Activated CD4-positive, alpha-beta T cell treated with anti-CD3 and anti-CD28 coated beads, Interleukin-2, amount 10 ng/mL, durations not matched to agents 24 days and 14 days (primary cell): ENCODE measurements at regions of chr5 and their contacts with region 1.

Region 1: GRCh38 chr5:110086658-110087388 is 397.1 kb downstream of the MAN2A1 start:
- DNase-seq: peak; percentile 80
- H3K4me3 Mint-ChIP-seq: peak overlapping the region; percentile 52
- H3K27ac Mint-ChIP-seq: peak overlapping the region; percentile 82
- H3K4me1 Mint-ChIP-seq: peaks cover 30% of the 10 kb centered on the region
- H3K27me3 Mint-ChIP-seq: no peaks in the 10 kb centered on the region

Region 2: GRCh38 chr5:108748401-108749127 is 1338.3 kb before region 1 on chr5:
- intact Hi-C with region 1: loop called (anchors 5 kb)
- DNase-seq: peak; percentile 99
- H3K4me3 Mint-ChIP-seq: peak overlapping the region; percentile 87
- H3K27ac Mint-ChIP-seq: peak overlapping the region; percentile 84
- H3K4me1 Mint-ChIP-seq: peaks cover 8% of the 10 kb centered on the region
- H3K27me3 Mint-ChIP-seq: peaks cover 37% of the 10 kb centered on the region

Region 3: GRCh38 chr5:109921735-109922380 is 165.0 kb before region 1 on chr5:
- intact Hi-C with region 1: loop called (anchors 5 kb)
- DNase-seq: peak; percentile 88
- H3K4me3 Mint-ChIP-seq: peak overlapping the region; percentile 72
- H3K27ac Mint-ChIP-seq: peak overlapping the region; percentile 90
- H3K4me1 Mint-ChIP-seq: peaks cover 26% of the 10 kb centered on the region
- H3K27me3 Mint-ChIP-seq: no peaks in the 10 kb centered on the region

Region 4: GRCh38 chr5:109959652-109960051 is 127.2 kb before region 1 on chr5:
- intact Hi-C with region 1: loop called (anchors 10 kb)
- DNase-seq: no peak
- H3K4me3 Mint-ChIP-seq: no peak overlapping the region
- H3K27ac Mint-ChIP-seq: no peak overlapping the region
- H3K4me1 Mint-ChIP-seq: peaks cover 6% of the 10 kb centered on the region
- H3K27me3 Mint-ChIP-seq: no peaks in the 10 kb centered on the region

Region 5: DNA sequence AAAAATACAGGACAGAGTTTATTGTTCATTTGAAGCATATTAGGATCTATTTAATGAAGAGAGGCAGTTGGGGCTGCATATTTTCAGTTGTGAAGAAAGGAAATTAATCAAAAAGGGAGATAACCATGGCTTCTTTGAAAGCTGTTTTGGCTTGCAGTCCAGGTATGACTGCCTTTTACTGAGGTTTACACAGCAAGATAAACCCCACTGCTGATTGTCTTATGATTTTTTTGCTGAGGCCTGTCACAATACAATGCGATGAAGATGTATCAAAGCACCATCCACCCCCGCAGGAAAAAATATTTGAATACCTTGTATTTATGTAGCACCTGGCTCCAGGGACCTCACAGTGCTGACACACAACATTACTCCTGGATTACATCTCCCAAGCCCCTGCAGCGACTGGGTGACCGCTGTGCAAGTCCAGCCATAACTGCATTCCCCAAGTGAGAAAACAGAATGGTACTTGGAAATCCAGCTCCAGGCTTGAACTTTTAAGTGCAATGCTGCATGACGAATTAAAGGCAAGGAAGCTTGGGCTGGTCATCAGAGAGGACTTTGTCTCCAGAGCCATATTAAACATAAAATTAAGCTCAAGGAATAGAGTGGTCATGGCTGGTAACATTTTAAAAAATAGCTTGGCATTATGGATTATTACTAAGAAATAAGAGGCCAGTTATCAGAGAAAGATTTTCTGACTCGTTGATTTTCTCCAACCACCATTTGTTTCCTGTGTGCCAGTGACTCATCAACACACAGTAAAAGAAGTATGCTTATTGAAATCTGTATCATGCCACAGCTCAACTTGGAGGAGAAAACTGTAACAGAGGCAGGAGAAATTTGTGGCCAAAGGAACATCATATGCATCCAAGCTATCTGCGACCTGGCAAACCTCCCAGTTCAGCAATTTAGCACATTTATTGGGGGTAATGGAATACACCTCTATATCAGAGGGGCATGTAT is 22.9 kb before region 1 on chr5:
- intact Hi-C with region 1: loop called (anchors 1 kb)
- DNase-seq: no peak
- H3K4me3 Mint-ChIP-seq: no peak overlapping the region
- H3K27ac Mint-ChIP-seq: no peak overlapping the region
- H3K4me1 Mint-ChIP-seq: peaks cover 18% of the 10 kb centered on the region
- H3K27me3 Mint-ChIP-seq: no peaks in the 10 kb centered on the region

Region 6: DNA sequence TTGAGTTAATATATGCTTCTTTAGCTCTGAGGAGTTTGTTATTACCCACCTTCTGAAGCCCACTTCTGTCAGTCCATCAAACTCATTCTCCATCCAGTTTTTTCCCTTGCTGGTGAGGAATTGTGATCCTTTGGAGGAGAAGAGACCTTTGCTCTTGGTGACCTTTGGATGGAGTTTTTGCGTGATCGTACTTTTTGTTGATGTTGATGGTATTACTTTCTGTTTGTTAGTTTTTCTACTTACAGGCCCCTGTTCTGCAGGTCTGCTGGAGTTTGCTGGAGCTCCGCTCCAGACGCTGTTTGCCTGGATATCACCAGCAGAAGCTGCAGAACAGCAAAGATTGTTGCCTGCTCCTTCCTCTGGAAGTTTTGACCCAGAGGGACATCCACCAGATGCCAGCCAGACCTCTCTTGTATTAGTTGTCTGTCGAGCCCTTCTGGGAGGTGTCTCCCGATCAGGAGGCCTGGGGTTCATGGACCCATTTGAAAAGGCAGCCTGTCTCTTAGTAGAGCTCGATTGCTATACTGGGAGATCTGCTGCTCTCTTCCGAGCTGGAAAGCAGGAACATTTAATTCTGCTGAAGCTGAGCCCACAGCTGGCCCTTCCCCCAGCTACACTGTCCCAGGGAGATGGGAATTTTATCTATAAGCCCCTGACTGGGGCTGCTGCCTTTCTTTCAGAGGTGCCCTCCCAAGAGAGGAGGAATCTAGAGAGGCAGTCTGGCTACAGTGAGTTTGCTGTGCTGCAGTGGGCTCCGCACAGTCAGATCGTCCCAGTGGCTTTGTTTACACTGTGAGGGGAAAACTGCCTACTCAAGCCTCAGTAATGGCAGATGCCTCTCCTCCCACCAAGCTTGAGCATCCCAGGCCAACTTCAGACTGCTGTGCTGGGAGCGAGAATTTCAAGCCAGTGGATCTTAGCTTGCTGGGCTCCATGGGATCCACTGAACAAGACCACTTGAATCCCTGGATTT is 48.4 kb after region 1 on chr5:
- intact Hi-C with region 1: no loop called
- DNase-seq: no peak
- H3K4me3 Mint-ChIP-seq: no peak overlapping the region
- H3K27ac Mint-ChIP-seq: no peak overlapping the region
- H3K4me1 Mint-ChIP-seq: no peaks in the 10 kb centered on the region
- H3K27me3 Mint-ChIP-seq: no peaks in the 10 kb centered on the region

Region 7: DNA sequence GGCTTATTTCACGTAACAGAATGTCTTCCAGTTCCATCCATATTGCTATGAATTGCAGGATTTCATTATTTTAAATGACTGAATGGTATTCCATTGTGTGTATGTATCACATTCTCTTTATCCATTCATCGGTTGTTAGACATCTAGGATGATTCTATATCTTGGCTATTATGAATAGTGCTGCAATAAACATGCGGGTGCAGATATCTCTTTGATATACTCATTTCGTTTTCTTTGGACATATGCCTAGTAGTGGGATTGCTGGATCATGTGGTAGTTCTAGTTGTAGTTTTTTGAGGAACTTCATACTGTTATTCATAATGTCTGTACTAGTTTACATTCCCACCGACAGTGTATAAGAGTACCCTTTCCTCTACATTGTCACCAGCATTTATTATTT is 63.4 kb after region 1 on chr5:
- intact Hi-C with region 1: no loop called
- DNase-seq: no peak
- H3K4me3 Mint-ChIP-seq: no peak overlapping the region
- H3K27ac Mint-ChIP-seq: no peak overlapping the region
- H3K4me1 Mint-ChIP-seq: no peaks in the 10 kb centered on the region
- H3K27me3 Mint-ChIP-seq: no peaks in the 10 kb centered on the region